Testis (tissue), 5 donors: ENCODE measurements at regions of chr16 and their contacts with region 1.

Region 1: DNA sequence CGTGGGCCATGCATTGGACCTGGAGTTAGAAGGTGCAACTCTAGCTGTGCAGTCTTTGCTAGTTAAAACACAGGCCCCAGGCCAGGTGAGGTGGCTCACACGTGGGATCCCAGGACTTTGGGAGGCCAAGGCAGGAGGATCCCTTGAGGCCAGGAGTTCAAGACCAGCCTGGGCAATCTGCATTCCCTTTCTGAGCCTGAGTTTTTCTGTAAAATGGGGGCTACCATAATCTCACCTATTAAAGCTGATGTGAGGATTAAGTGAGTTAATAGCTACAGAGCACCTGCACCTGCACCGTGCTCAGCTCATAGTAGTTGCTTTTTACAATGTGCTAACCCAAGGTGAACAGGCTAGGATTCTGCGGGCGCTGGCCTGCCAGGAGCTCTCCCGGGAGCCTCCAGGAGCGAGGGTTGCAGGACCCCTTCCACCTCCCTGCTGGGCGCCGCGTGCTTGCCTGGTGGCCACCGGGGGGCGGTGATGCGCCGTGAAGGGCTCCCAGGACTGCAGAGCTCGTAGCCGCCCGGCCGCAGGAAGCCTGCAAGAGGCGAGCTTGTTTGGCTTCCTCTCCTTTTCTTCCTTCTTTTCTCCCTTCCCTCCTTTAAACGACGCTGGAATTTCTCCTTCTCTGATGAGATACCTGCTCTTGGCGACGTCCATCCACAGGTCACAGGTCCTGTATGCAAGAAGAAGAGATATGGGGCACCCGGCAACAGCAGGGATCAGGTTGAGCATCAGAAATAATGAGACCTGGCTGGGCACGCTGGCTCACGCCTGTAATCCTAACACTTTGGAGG is 51.3 kb downstream of the ZFP90 start:
- DNase-seq: peak; percentile 81
- H3K4me3 ChIP-seq: no peak overlapping the region
- H3K27ac ChIP-seq: no peak overlapping the region
- H3K4me1 ChIP-seq: no peaks in the 10 kb centered on the region
- H3K27me3 ChIP-seq: no peaks in the 10 kb centered on the region
- CTCF ChIP-seq: peak; percentile 49 to 67 (median 56)
- POLR2A ChIP-seq: no peak

Region 2: DNA sequence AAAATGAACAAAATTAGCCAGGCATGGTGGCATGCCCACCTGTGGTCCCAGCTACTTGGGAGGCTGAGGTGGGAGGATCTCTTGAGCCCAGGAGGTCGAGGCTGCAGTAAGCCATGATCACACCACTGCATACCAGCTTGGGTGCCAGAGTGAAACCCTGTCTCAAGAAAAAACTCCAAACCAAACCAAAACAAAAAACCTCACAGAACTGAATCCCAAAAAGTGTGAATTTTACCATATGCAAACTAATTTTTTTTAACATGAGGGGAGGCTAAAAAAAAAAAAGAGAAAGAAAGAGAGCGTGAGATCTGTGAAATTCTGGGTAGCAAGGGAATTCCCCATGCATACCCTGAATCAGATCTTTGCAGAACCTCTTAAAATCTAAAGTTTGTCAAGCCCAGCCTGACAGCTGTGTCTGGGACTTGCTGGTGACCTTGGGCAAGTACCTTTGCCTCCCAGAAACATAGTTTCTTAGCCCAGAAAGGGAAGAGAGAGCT is 129.6 kb after region 1 on chr16:
- intact Hi-C with region 1: no loop called
- DNase-seq: no peak
- H3K4me3 ChIP-seq: no peak overlapping the region
- H3K27ac ChIP-seq: no peak overlapping the region
- H3K4me1 ChIP-seq: no peaks in the 10 kb centered on the region
- H3K27me3 ChIP-seq: no peaks in the 10 kb centered on the region
- CTCF ChIP-seq: no peak
- POLR2A ChIP-seq: no peak

Region 3: GRCh38 chr16:68790130-68790761 is 199.8 kb after region 1 on chr16:
- intact Hi-C with region 1: loop called (anchors 10 kb)
- DNase-seq: no peak
- H3K4me3 ChIP-seq: no peak overlapping the region
- H3K27ac ChIP-seq: no peak overlapping the region
- H3K4me1 ChIP-seq: no peaks in the 10 kb centered on the region
- H3K27me3 ChIP-seq: no peaks in the 10 kb centered on the region
- CTCF ChIP-seq: no peak
- POLR2A ChIP-seq: no peak

Region 4: DNA sequence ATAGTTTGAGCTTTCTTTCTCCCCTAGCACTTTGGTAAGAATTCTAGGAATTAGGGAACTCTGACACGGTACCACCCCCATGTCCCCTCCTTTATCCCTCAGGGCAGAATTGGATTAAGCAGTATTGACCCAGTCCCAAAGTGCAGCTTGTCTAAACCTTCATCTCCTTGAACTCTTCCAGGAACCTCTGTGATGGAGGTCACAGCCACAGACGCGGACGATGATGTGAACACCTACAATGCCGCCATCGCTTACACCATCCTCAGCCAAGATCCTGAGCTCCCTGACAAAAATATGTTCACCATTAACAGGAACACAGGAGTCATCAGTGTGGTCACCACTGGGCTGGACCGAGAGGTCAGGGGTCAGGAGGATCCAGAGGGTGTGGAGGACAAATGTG is 221.1 kb after region 1 on chr16:
- intact Hi-C with region 1: no loop called
- DNase-seq: no peak
- H3K4me3 ChIP-seq: no peak overlapping the region
- H3K27ac ChIP-seq: no peak overlapping the region
- H3K4me1 ChIP-seq: no peaks in the 10 kb centered on the region
- H3K27me3 ChIP-seq: no peaks in the 10 kb centered on the region
- CTCF ChIP-seq: no peak
- POLR2A ChIP-seq: no peak